PC-9 (cell line): ENCODE measurements at regions of chr3 and their contacts with region 1.

Region 1: GRCh38 chr3:189292667-189293478 is 121.1 kb downstream of the TPRG1 start:
- DNase-seq: peak; percentile 70 to 82
- H3K4me3 ChIP-seq: no peak overlapping the region
- H3K27ac ChIP-seq: peak overlapping the region; percentile 52
- H3K4me1 ChIP-seq: peaks cover 22% of the 10 kb centered on the region
- H3K27me3 ChIP-seq: no peaks in the 10 kb centered on the region
- CTCF ChIP-seq: no peak

Region 2: DNA sequence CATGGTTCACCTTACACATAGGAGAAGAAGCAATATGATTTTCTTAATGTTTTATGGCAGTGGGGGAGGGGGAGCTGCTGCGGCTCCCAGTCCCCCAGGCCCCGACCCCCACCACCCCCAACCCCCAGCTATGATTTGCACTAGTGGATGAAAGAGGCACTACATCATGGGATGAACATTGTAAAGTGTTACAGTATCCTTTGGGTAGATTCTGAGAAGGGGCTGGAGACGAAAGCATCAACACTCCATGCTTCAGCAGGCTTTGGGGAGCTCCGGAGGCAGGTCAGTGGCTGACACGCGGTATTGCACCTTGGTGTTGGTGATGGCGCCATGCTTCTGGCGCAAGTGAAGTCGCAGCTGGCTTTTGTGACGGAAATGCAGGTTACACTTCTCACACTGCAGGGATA is 1570.7 kb before region 1 on chr3:
- CTCF ChIA-PET with region 1: no interaction called
- POLR2A ChIA-PET with region 1: no interaction called
- intact Hi-C with region 1: no loop called
- DNase-seq: no peak
- H3K4me3 ChIP-seq: no peak overlapping the region
- H3K27ac ChIP-seq: no peak overlapping the region
- H3K4me1 ChIP-seq: no peaks in the 10 kb centered on the region
- H3K27me3 ChIP-seq: no peaks in the 10 kb centered on the region
- CTCF ChIP-seq: no peak

Region 3: DNA sequence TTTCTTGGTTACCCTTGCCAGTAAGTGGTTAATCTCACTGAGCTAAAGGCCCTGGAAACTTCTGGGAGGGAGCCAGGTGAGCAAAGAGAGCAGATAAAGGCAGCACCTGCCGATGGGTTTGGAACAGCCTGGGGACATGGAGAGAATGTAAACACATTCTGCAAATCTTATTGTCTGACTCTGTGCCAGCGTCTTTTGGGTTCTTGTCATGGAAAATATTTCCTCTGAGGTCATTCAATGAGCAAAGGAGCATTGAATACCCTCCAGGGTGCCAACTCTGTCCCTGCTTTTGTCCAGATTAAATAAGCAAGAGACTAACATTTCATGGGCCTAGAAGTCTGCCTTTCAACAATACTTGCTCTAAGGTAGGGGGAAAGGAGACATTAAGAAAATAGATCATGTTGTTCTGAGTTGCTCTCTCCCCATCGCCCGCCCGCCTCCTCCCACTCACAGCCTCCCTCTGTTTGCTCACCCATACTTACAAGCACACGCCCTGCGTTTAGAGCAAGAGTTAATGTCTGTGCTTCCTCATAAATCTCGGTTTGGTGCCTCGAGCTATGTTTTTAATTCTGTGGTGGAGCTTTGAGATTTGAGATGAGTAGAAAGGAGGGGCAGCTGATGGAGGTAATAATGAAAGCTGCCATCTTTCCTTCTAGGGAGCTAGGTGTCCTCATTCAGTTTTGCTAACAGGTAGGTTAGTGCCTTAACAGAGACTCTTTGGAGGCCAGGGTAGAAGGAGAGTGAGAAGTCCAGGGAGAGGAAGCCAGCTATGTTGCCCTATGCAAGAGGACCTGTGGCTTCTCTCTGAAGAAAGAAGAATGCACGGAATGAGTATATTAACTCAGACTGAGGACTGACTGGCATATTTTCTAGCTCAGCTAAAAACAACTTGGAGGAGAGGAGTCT is 11.8 kb after region 1 on chr3:
- CTCF ChIA-PET with region 1: no interaction called
- POLR2A ChIA-PET with region 1: interaction called, 6 read pairs
- intact Hi-C with region 1: loop called (anchors 1 kb)
- DNase-seq: peak; percentile 93 to 99
- H3K4me3 ChIP-seq: peak overlapping the region; percentile 27; the same call in 1 of the 2 replicates
- H3K27ac ChIP-seq: peak overlapping the region; percentile 85
- H3K4me1 ChIP-seq: peaks cover 44% of the 10 kb centered on the region
- H3K27me3 ChIP-seq: no peaks in the 10 kb centered on the region
- CTCF ChIP-seq: no peak